Caco-2 (cell line): ENCODE measurements at regions of chr1 and their contacts with region 1.

Region 1: GRCh38 chr1:43529206-43529731 is 1.4 kb upstream of the PTPRF start:
- DNase-seq: peak; percentile 73 to 84
- H3K4me3 ChIP-seq: no peak overlapping the region
- H3K4me3 Mint-ChIP-seq: peak overlapping the region; percentile 78
- H3K27ac Mint-ChIP-seq: no peak overlapping the region
- H3K4me1 ChIP-seq: peaks cover 32% of the 10 kb centered on the region
- H3K4me1 Mint-ChIP-seq: peaks cover 64% of the 10 kb centered on the region
- H3K27me3 ChIP-seq: no peaks in the 10 kb centered on the region
- H3K27me3 Mint-ChIP-seq: no peaks in the 10 kb centered on the region
- CTCF ChIP-seq: peak; percentile 84

Region 2: GRCh38 chr1:43590389-43590925 is 61.2 kb after region 1 on chr1:
- CTCF ChIA-PET with region 1: interaction called, 3 read pairs
- POLR2A ChIA-PET with region 1: no interaction called
- intact Hi-C with region 1: loop called (anchors 1 kb)
- DNase-seq: peak; percentile 45 to 50
- H3K4me3 ChIP-seq: no peak overlapping the region
- H3K4me3 Mint-ChIP-seq: no peak overlapping the region
- H3K27ac Mint-ChIP-seq: no peak overlapping the region
- H3K4me1 ChIP-seq: no peaks in the 10 kb centered on the region
- H3K4me1 Mint-ChIP-seq: peaks cover 8% of the 10 kb centered on the region
- H3K27me3 ChIP-seq: no peaks in the 10 kb centered on the region
- H3K27me3 Mint-ChIP-seq: no peaks in the 10 kb centered on the region
- CTCF ChIP-seq: peak; percentile 37 to 49

Region 3: GRCh38 chr1:43650310-43651085 is 121.2 kb after region 1 on chr1:
- CTCF ChIA-PET with region 1: interaction called, 4 read pairs
- POLR2A ChIA-PET with region 1: interaction called, 7 read pairs
- intact Hi-C with region 1: loop called (anchors 2 kb)
- DNase-seq: peak; percentile 94 to 97
- H3K4me3 ChIP-seq: peak overlapping the region; percentile 72
- H3K4me3 Mint-ChIP-seq: peak overlapping the region; percentile 84
- H3K27ac Mint-ChIP-seq: peak overlapping the region; percentile 83
- H3K4me1 ChIP-seq: no peaks in the 10 kb centered on the region
- H3K4me1 Mint-ChIP-seq: peaks cover 7% of the 10 kb centered on the region
- H3K27me3 ChIP-seq: no peaks in the 10 kb centered on the region
- H3K27me3 Mint-ChIP-seq: no peaks in the 10 kb centered on the region
- CTCF ChIP-seq: no peak

Region 4: GRCh38 chr1:43934101-43934985 is 405.1 kb after region 1 on chr1:
- CTCF ChIA-PET with region 1: interaction called, 3 read pairs
- POLR2A ChIA-PET with region 1: no interaction called
- intact Hi-C with region 1: loop called (anchors 1 kb)
- DNase-seq: peak; percentile 59 to 63
- H3K4me3 ChIP-seq: no peak overlapping the region
- H3K4me3 Mint-ChIP-seq: peak overlapping the region; percentile 61
- H3K27ac Mint-ChIP-seq: no peak overlapping the region
- H3K4me1 ChIP-seq: peaks cover 9% of the 10 kb centered on the region
- H3K4me1 Mint-ChIP-seq: no peaks in the 10 kb centered on the region
- H3K27me3 ChIP-seq: no peaks in the 10 kb centered on the region
- H3K27me3 Mint-ChIP-seq: no peaks in the 10 kb centered on the region
- CTCF ChIP-seq: peak; percentile 61 to 72